ENCODE measurements at regions of chr2 and their contacts with region 1.

Region 1: DNA sequence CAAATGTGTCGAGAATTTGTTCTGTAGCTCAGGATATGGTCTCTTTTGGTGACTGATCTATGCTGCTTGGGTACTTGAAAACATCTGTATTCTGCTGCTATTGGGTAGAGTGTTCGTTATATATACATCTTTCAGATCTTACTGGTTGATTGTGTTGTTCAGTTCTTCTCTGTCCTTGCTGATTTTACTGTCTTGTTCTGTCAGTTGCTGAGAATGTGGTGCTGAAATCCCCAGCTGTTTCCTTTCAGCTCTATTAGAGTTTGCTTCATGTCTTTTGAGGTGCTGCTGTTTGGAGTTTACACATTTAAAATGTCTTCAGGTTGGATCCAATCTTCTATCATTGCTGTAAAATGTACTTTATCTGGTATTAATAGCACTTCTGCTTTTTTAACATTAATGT is 12.9 kb downstream of the BCL2L11 start:
- DNase-seq: no peak
- ATAC-seq: no peak
- H3K4me3 ChIP-seq: no peak overlapping the region
- H3K27ac ChIP-seq: no peak overlapping the region
- H3K4me1 ChIP-seq: peaks cover 0 to 50% (median 31%) of the 10 kb centered on the region in 9 donors
- H3K27me3 ChIP-seq: no peaks in the 10 kb centered on the region
- CTCF ChIP-seq: no peak

Region 2: DNA sequence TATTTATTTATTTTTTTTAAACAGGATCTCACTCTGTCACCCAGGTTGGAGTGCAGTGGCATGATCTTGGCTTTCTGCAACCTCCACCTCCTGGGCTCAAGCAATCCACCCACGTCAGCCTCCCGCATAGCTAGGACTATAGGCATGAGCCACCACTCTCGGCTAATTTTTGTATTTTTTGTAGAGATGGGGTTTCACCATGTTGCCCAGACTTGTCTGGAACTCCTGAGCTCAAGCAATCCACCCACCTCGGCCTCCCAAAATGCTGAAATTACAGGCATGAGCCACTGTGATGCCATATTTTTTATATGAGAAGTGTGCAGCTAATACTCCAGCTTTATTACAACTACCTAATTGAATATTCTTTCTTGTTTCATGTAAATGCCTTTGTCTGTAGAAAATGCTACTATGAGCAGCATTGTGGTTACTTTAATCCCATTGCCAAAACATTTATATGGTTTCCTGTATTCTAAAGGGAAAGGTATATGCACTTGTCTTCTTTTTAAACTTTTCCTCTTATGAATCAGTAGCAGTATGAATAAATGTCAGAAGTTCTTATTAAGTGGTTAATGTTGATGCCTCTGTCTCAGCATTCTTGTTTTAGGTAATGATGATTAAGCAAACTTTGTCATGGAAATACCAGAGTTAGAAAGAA is 22.4 kb before region 1 on chr2:
- intact Hi-C with region 1: loop called in 1 of 10 experiments (anchors 2 kb)
- DNase-seq: no peak
- ATAC-seq: no peak
- H3K4me3 ChIP-seq: no peak overlapping the region
- H3K27ac ChIP-seq: no peak overlapping the region
- H3K4me1 ChIP-seq: no peaks in the 10 kb centered on the region
- H3K27me3 ChIP-seq: peaks cover 0 to 53% (median 39%) of the 10 kb centered on the region in 7 donors
- CTCF ChIP-seq: no peak

Measured in heart right ventricle (tissue), 16 donors.